ENCODE measurements at regions of chr15 and their contacts with region 1.

Region 1: DNA sequence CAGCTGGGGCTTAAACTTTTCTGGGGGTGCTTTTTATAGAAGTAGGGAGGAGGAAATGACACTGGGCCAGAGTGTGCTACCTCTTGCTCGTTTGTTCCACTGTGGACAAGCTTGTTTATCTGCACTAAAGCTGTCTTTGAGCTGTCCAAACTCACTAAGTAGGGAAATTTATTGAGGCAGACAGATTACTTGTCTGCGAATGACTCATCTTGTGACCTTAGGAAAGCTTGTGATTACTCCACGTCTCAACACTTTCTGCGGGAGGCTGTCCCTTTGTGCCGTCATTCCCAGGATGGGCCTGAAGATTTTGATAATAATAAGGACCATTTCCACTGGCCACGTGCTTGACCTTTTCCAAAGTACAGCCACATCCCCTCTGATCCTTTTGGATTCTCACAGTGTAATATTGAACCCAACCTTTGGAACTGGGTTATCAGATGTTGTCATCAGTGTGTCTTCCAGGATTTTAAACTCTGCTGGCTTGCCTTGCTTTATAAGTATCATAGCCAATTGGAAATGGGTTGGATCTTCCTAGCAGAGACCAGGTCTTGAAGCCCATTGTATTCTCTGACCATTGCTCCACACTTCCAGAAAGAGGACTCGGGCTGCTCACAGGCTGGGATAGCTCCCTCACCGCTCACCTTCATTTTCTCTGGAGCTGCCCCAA is 84.7 kb downstream of the AGBL1 start:
- DNase-seq: no peak
- H3K4me3 ChIP-seq: no peak overlapping the region
- H3K27ac ChIP-seq: peak overlapping the region in 3 of 4 donors; percentile 13 to 40 (median 14)
- H3K4me1 ChIP-seq: peaks cover 0 to 2% (median 0%) of the 10 kb centered on the region in 4 donors
- H3K27me3 ChIP-seq: no peaks in the 10 kb centered on the region
- CTCF ChIP-seq: no peak
- EP300 ChIP-seq: no peak
- POLR2A ChIP-seq: no peak

Region 2: GRCh38 chr15:86089422-86089821 is 74.9 kb before region 1 on chr15:
- in situ Hi-C with region 1: no loop called
- intact Hi-C with region 1: loop called (anchors 2 kb)
- DNase-seq: no peak
- H3K4me3 ChIP-seq: no peak overlapping the region
- H3K27ac ChIP-seq: no peak overlapping the region
- H3K4me1 ChIP-seq: no peaks in the 10 kb centered on the region
- H3K27me3 ChIP-seq: no peaks in the 10 kb centered on the region
- CTCF ChIP-seq: no peak
- EP300 ChIP-seq: no peak
- POLR2A ChIP-seq: no peak

Region 3: GRCh38 chr15:86311568-86312280 is 147.4 kb after region 1 on chr15:
- in situ Hi-C with region 1: no loop called
- intact Hi-C with region 1: no loop called
- DNase-seq: no peak
- H3K4me3 ChIP-seq: no peak overlapping the region
- H3K27ac ChIP-seq: no peak overlapping the region
- H3K4me1 ChIP-seq: no peaks in the 10 kb centered on the region
- H3K27me3 ChIP-seq: no peaks in the 10 kb centered on the region
- CTCF ChIP-seq: no peak
- EP300 ChIP-seq: no peak
- POLR2A ChIP-seq: no peak